K562 (cell line): ENCODE measurements at regions of chr3 and their contacts with region 1.

Region 1: GRCh38 chr3:88003115-88003755 is 55.6 kb downstream of the CGGBP1 start:
- DNase-seq: peak; percentile 11 to 60 (median 19)
- ATAC-seq: peak; percentile 61; the same call in 2 of the 3 replicates
- H3K4me3 ChIP-seq: no peak overlapping the region
- H3K27ac ChIP-seq: no peak overlapping the region
- H3K4me1 ChIP-seq: no peaks in the 10 kb centered on the region
- H3K27me3 ChIP-seq: no peaks in the 10 kb centered on the region
- CTCF ChIP-seq: peak; percentile 34 to 68 (median 55); a peak in 5 of 6 replicates
- EP300 ChIP-seq: no peak
- POLR2A ChIP-seq: no peak
- RAD21 ChIP-seq: peak; percentile 81 to 91

Region 2: DNA sequence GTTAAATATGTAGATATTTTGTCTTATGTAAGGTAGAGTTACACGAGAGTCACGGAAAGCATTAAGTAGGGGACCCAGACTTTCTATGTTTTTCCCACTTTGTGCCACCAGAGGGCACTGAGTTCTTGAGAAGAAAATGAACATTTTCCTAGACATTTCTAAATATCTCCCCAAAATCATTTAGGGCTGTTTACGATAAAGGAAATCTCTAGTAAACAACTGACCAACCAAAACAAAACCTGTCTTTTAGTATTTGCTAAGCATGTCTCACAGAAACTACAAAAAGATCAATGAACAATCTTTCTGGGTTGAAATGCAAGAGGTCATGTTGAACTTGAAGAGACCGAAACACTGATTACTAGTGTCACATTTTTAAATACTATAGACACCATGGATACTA is 743.0 kb before region 1 on chr3:
- CTCF ChIA-PET with region 1: interaction called, 10 read pairs
- POLR2A ChIA-PET with region 1: no interaction called
- in situ Hi-C with region 1: no loop called
- intact Hi-C with region 1: no loop called
- DNase-seq: peak; percentile 8 to 57 (median 14)
- ATAC-seq: peak; percentile 65
- H3K4me3 ChIP-seq: no peak overlapping the region
- H3K27ac ChIP-seq: no peak overlapping the region
- H3K4me1 ChIP-seq: no peaks in the 10 kb centered on the region
- H3K27me3 ChIP-seq: no peaks in the 10 kb centered on the region
- CTCF ChIP-seq: peak in 2 of 3 experiments; percentile 45 to 60; a peak in 4 of 6 replicates
- EP300 ChIP-seq: no peak
- POLR2A ChIP-seq: no peak
- RAD21 ChIP-seq: peak; percentile 29 to 50; a peak in 3 of 4 replicates

Region 3: GRCh38 chr3:87307803-87308202 is 695.4 kb before region 1 on chr3:
- CTCF ChIA-PET with region 1: no interaction called
- POLR2A ChIA-PET with region 1: no interaction called
- in situ Hi-C with region 1: loop called (anchors 25 kb)
- intact Hi-C with region 1: no loop called
- DNase-seq: no peak
- ATAC-seq: no peak; the same call in 2 of the 3 replicates
- H3K4me3 ChIP-seq: no peak overlapping the region
- H3K27ac ChIP-seq: no peak overlapping the region
- H3K4me1 ChIP-seq: no peaks in the 10 kb centered on the region
- H3K27me3 ChIP-seq: no peaks in the 10 kb centered on the region
- CTCF ChIP-seq: peak in 1 of 3 experiments; percentile 28; a peak in 2 of 6 replicates
- EP300 ChIP-seq: no peak
- POLR2A ChIP-seq: no peak
- RAD21 ChIP-seq: 0 out of 4 replicates have a peak, but pooled peaks of 1 of the 2 experiments have one; percentile 9

Region 4: GRCh38 chr3:87509401-87509800 is 493.8 kb before region 1 on chr3:
- CTCF ChIA-PET with region 1: interaction called, 3 read pairs
- POLR2A ChIA-PET with region 1: no interaction called
- in situ Hi-C with region 1: no loop called
- intact Hi-C with region 1: loop called (anchors 5 kb)
- DNase-seq: peak in 1 of 4 experiments; percentile 11
- ATAC-seq: no peak
- H3K4me3 ChIP-seq: no peak overlapping the region
- H3K27ac ChIP-seq: no peak overlapping the region
- H3K4me1 ChIP-seq: no peaks in the 10 kb centered on the region
- H3K27me3 ChIP-seq: no peaks in the 10 kb centered on the region
- CTCF ChIP-seq: no peak
- EP300 ChIP-seq: no peak
- POLR2A ChIP-seq: no peak
- RAD21 ChIP-seq: no peak

Region 5: GRCh38 chr3:87771341-87772192 is 231.7 kb before region 1 on chr3:
- CTCF ChIA-PET with region 1: interaction called, 4 read pairs
- POLR2A ChIA-PET with region 1: no interaction called
- in situ Hi-C with region 1: no loop called
- intact Hi-C with region 1: loop called (anchors 5 kb)
- DNase-seq: peak in 3 of 4 experiments; percentile 12 to 40 (median 15)
- ATAC-seq: peak; percentile 86
- H3K4me3 ChIP-seq: no peak overlapping the region
- H3K27ac ChIP-seq: no peak overlapping the region
- H3K4me1 ChIP-seq: no peaks in the 10 kb centered on the region
- H3K27me3 ChIP-seq: no peaks in the 10 kb centered on the region
- CTCF ChIP-seq: peak; percentile 59 to 73 (median 61)
- EP300 ChIP-seq: no peak
- POLR2A ChIP-seq: no peak
- RAD21 ChIP-seq: peak in 1 of 2 experiments; percentile 45; a peak in 3 of 4 replicates

Region 6: DNA sequence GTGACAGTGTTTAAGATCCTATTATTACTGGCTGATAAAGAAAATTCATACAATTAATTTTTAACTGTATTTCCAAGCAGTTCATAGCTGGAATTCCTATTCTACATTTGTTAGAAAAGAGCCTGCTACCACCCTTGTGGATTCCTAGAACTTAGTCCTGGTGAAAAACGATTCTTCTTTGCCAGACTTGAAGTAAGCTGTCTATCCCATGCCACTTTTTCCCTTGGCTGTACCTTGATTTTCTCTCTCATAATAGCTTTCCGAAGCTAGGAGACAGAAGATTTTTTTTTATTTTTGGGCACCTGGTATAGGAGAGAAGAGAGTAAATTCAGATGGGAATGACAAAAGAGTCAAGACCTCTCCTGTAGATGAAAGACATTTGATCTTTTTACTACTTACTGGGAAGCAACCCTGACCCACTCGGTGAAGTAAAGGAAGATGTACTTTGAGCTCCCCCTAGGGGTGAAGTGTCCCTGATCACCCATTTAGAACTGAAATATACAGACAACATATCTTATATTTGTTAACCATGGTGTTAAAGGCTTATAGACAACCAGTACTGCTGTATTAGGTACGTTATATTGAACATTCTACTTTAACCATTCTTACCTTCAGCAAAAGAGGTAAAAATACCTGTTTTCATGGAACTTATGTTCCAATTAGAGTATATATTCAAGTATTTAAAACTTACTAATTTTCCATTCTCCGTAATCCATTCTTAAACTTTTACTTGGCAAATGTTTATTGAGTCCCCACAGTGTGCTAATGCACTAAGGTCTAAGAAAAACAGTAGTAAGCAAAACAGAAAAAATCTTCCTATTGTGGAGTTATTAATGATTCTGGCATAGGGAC is 110.3 kb after region 1 on chr3:
- CTCF ChIA-PET with region 1: no interaction called
- POLR2A ChIA-PET with region 1: interaction called, 4 read pairs
- in situ Hi-C with region 1: no loop called
- intact Hi-C with region 1: loop called (anchors 1 kb)
- DNase-seq: peak; percentile 25 to 79 (median 47)
- ATAC-seq: peak; percentile 97
- H3K4me3 ChIP-seq: no peak overlapping the region
- H3K27ac ChIP-seq: no peak overlapping the region
- H3K4me1 ChIP-seq: no peaks in the 10 kb centered on the region; a peak in 1 of 5 replicates
- H3K27me3 ChIP-seq: no peaks in the 10 kb centered on the region
- CTCF ChIP-seq: peak; percentile 44 to 63 (median 52)
- EP300 ChIP-seq: no peak
- POLR2A ChIP-seq: no peak
- RAD21 ChIP-seq: peak; percentile 43 to 68

Region 7: GRCh38 chr3:88311826-88312225 is 308.6 kb after region 1 on chr3:
- CTCF ChIA-PET with region 1: no interaction called
- POLR2A ChIA-PET with region 1: no interaction called
- in situ Hi-C with region 1: no loop called
- intact Hi-C with region 1: no loop called
- DNase-seq: no peak
- ATAC-seq: no peak
- H3K4me3 ChIP-seq: no peak overlapping the region
- H3K27ac ChIP-seq: no peak overlapping the region
- H3K4me1 ChIP-seq: no peaks in the 10 kb centered on the region
- H3K27me3 ChIP-seq: no peaks in the 10 kb centered on the region
- CTCF ChIP-seq: no peak
- EP300 ChIP-seq: no peak
- POLR2A ChIP-seq: no peak
- RAD21 ChIP-seq: no peak